ENCODE measurements at regions of chr3 and their contacts with region 1.

Region 1: DNA sequence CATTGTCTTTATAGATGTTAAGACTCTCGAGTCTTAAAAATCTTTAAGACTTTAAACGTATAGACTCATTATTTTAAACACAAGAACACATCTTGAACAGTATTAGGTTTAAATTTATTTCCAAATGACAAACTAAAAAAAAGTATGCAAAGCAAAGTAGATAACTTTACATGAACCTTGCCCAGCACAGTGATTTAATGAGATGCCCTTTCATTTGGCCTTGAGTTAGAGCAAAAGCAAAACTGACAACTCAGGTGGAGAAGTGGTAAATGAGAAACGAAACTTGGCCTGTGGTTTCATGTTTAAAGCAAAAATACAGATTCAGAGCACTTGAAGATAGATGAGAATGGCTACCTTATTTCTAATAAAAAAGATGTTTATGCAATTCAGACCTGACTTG is 8.6 kb downstream of the GPR15 start:
- DNase-seq: no peak
- H3K4me3 ChIP-seq: no peak overlapping the region
- H3K27ac ChIP-seq: no peak overlapping the region
- H3K4me1 ChIP-seq: no peaks in the 10 kb centered on the region
- H3K27me3 ChIP-seq: no peaks in the 10 kb centered on the region
- CTCF ChIP-seq: no peak

Region 2: DNA sequence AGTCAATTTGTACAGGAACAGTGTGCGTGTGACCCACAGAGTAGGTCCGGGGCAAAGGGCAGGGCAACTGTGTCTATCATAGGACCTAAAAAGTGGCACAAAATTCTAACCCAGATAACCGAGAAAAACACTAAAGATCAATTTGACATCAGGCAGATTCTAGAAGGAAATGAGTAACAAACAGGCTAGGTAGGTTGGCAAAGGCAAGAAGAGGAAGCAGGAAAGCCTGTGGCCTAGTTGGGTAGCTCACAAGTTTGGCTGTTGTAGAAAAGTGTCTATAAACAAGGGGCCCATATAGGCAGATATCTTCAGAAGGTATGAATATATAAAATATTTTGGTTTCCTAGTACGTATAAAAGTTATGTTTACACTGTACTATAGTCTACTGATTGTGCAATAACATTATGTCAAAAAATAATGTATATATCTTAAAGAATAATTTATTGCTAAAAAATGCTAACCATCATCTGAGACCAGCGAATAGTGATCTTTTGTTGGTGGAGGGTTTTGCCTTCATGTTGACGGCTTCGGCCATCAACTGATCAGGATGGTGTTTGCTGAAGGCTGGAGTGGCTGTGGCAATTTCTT is 90.6 kb before region 1 on chr3:
- CTCF ChIA-PET with region 1: no interaction called
- POLR2A ChIA-PET with region 1: interaction called, 10 read pairs
- intact Hi-C with region 1: no loop called
- DNase-seq: no peak
- H3K4me3 ChIP-seq: no peak overlapping the region
- H3K27ac ChIP-seq: no peak overlapping the region
- H3K4me1 ChIP-seq: no peaks in the 10 kb centered on the region
- H3K27me3 ChIP-seq: no peaks in the 10 kb centered on the region
- CTCF ChIP-seq: no peak

Measured in PC-9 (cell line).